ENCODE measurements at regions of chr12 and their contacts with region 1.

Region 1: DNA sequence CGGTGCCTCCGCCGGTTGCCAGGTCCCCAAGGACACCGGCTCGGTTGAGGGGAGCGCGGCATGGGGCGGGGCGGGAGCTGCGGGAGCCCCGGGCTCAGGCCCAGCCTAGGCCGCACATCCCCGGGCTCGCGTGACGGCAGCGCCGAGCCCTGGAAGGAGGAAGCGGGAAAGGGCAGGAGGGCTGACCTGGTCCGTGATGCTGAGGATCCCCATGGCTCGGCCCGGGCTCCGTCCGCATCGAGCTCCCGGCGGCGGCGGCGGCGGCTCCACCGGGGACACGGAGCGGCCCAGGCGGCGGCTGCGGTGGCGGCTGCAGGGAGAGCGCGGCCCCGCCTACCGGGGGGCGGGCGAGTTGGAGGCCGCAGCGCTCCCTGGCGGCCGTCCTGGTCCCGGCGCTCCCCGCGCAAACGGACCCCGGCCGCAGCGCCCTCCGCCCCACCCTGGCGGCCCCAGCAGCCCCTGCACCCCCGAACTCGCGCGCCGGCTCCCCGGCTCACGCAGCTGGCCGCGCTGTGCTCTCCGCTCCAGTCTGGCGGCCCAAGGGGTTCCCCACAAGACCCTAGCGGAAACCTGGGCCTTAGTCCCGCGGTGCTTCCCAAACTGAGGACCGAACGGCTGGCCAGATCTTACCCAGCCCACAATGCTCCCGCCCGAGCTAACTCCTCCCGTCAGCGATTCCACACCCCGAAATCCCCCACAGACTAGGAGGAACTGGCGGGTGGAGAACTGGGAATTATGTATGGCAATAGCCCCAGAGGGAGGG is at the start of gene ANKRD52:
- DNase-seq: peak; percentile 96
- CTCF ChIP-seq: peak; percentile 88

Region 2: DNA sequence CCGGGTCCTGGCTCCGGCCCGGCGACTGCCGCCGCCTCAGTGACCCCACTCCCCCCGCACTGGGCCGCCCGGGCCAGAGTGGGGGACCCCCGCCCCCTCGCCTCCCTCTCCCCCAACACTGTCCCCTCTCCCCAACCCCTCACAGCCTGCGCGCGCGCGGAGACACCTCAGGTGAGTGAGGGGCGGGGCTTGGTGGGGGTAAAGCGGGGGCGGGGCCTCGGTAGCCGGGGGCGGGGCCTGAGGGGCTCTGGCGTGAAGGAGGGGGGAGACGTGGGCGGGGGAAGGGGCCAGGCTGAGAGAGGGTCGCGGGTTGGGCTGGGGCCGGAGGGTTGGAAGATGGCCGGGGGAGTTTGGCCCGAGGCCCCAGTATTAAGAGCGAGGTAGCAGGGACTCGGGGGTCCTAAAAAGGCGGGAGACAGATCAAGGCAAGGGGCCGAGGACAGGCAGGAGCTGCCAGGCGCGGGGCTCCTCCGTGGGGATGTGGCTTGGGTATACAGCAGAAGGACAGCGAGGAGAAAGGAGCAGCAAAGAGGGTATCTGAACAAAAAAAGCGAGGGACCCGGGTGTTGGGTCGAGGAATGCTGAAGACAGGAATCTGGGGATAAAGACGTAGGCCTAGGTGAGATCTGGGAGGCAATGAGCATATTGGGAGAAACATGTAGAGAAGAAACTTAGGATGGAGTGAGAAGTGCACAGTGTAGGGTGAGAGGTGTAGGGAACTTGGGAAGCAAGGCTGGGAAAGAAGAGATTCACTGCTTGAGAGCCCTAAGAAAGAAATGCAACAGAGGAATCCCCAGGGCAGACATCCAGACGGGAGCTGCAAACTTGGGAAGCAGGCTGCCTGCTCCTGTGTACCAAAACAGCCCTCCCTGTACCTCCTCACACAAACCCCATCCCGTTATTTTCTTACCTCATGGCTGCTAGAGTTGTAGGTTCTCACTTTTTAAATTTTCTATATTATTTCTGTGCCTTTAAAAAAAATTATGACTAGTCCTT is 250.4 kb before region 1 on chr12:
- CTCF ChIA-PET with region 1: no interaction called
- POLR2A ChIA-PET with region 1: no interaction called
- DNase-seq: peak; percentile 84
- CTCF ChIP-seq: no peak

Region 3: GRCh38 chr12:56206457-56207166 is 51.6 kb before region 1 on chr12:
- CTCF ChIA-PET with region 1: interaction called, 20 read pairs
- POLR2A ChIA-PET with region 1: no interaction called
- DNase-seq: peak; percentile 48
- CTCF ChIP-seq: peak; percentile 53

Region 4: DNA sequence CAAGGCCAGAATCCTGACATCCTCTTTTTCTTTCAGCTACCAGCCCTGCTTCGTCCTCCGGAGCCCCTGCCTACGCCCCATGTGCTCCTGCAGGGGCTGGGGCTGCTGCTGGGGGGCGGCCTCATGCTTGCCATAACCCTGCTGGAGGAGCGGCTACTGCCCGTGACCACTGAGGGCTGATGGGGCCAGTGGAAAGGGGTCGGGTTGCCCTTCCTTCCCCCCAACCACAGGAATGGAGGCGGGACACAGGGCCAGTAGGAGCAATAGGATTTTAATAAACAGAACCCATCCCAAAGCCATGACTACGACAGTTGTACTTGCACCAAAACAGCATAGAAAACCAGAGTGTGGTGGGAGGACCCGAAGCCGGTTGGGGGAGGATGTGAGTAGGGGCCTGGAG is 20.7 kb before region 1 on chr12:
- CTCF ChIA-PET with region 1: interaction called, 13 read pairs
- POLR2A ChIA-PET with region 1: no interaction called
- DNase-seq: no peak
- CTCF ChIP-seq: no peak

Region 5: DNA sequence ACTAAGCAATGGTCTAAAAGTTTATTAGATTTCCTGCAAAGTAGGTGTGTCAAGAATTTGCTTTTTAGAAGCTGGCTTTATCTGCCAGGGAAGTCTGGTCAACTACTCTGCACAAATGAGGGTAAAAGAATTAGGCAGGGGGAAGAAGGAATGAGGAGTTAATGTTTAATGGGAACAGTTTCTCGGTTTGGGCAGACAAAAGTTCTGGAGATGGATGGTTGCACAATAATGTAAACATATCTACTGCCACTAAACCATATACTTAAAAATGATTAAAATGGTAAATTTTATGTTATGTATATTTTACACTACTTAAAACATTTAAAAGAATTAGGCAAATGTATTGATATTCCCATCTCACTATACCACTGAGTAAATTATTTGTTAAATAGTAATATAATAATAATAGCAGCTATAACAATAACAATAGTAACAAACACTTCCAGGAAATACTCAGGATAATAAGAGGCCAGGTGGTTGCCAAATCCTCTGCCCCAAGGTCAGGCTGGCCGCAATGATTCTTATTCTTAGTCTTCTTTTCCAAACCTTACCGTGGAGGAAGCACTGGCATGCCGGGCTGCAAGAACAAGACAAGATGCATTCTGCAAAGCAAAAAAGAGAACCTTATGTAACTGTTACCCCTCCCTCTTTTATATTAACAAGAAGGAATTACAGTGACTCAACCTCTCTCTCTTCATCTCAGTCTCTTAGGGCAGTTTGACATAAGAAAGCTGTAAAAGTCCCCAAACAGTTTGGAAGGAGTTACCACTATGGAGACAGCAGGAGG is 28.0 kb after region 1 on chr12:
- CTCF ChIA-PET with region 1: interaction called, 10 read pairs
- POLR2A ChIA-PET with region 1: no interaction called
- DNase-seq: no peak
- CTCF ChIP-seq: no peak

Region 6: DNA sequence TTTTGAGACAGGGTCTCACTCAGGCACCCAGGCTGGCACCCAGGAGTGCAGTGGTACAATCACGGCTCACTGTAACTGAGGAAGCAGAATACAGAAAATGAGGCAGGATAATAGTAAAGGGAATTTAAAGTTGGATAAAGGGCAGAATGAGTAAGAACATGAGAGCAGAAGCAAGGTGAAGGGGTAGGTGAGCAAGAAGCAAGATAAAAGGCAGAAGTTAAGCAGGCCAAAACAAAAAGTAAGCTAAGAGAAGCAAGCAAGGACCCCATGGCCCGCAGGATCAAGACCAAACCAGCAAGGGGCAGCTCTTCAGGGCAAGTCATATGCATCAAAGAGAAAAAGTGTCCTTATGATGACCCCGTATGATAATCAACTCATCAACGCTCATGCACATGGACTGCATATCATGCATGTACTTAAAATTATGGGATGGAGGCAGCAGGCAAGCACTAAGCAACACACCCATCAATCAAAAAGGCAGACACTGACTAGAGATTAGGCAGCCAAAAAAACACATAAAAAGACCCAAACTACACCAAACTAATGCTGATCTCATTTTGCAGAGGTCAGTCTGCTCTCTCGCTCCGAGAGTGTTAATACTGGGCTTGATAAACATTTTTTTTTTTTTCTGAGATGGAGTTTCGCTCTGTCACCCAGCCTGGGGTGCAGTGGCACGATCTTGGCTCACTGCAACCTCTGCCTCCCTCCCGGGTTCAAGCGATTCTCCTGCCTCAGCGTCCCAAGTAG is 179.4 kb after region 1 on chr12:
- CTCF ChIA-PET with region 1: no interaction called
- POLR2A ChIA-PET with region 1: no interaction called
- DNase-seq: no peak
- CTCF ChIP-seq: no peak